ENCODE measurements at regions of chr15 and their contacts with region 1.

Region 1: DNA sequence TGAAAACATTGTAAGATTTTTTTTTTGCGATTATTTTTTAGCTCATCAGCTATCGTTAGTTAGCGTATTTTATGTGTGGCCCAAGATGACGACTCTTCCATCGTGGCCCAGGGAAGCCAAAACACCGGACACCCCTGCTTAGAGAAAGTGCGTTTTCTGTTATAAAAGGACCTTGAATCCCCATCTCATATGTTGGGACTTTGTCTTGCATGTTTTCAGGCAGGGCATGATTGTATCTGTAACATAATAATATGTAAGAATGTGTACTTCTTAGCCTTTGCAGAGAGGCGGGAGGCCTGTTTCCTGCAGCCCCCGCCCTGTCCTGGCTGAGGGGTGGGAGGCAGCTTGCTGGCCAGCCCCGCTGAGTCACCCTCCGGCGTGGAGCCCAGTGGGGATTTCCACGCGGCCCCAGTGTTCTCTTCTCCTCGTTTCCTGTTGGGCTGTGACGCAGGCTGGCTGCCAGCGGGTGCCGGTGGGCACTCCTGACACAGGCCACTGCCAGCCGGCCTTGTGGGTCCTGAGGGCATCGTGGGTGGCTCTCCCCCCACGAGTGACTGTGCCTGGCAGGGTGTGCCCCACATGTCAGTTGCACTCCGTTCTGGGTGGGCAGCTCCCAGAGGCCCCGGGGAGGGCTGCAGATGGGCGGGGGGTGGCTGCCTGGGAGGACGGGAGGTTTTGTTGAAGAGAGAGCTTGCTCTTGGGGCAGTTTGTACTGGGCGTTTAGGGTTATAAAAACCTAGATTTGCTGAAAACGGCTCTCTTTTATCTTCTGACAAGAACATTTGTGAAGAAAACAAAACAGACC is 55.6 kb downstream of the SMAD3 start:
- DNase-seq: peak; percentile 93

Region 2: DNA sequence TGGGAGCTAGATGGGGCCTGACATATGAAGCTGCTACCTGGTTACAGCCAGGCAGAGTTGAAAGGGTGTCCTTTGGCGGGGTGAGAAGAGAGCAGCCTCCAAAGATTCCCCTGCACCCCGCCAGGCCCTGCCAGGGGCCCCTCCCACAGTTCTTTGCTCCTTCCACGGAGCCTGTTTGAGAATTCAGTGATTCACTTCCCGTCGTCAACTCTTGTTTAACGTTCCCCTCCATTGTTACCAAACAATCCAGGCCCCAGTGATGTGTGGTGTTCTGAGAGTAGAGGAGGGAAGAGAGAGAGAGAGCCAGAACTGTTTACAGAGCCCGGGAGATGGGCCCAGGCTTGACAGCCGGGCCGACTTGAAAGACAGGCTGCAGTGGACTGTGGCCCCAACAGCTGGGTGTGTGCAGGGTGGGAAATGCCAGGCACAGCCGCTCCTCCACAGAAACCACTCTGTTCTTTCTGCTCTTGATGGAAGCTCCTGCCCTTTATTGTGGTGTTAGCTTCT is 25.9 kb after region 1 on chr15:
- intact Hi-C with region 1: loop called (anchors 2 kb)
- DNase-seq: peak; percentile 77

Region 3: GRCh38 chr15:67175643-67176071 is 54.6 kb after region 1 on chr15:
- intact Hi-C with region 1: no loop called
- DNase-seq: peak; percentile 83